Vagina (tissue), 2 donors: ENCODE measurements at regions of chr18 and their contacts with region 1.

Region 1: DNA sequence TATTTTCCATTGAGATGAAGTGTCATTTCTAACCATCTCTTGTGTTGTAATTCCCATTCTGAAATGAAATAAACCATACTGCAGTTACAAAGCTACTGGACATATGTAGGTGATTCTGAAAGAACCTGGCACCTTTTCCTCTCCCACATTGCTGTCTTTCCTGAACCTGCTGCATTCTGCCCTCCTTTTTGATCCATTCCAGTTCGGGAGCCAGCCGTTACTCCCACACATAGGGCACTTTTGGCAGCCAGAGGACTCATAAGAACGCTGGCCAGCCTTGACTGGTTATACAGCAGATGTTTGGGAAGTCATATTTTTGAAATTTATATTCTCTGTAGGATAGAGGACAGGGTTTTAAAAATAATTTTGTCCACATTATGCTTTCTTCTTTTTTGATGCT is 369.8 kb upstream of the CDH7 start:
- DNase-seq: no peak
- H3K4me3 ChIP-seq: no peak overlapping the region
- H3K27ac ChIP-seq: no peak overlapping the region
- H3K4me1 ChIP-seq: no peaks in the 10 kb centered on the region
- H3K27me3 ChIP-seq: no peaks in the 10 kb centered on the region
- CTCF ChIP-seq: no peak
- POLR2A ChIP-seq: no peak

Region 2: GRCh38 chr18:63808125-63808524 is 1572.9 kb before region 1 on chr18:
- intact Hi-C with region 1: loop called (anchors 5 kb)
- DNase-seq: no peak
- H3K4me3 ChIP-seq: no peak overlapping the region
- H3K27ac ChIP-seq: no peak overlapping the region
- H3K4me1 ChIP-seq: no peaks in the 10 kb centered on the region
- H3K27me3 ChIP-seq: no peaks in the 10 kb centered on the region
- CTCF ChIP-seq: no peak
- POLR2A ChIP-seq: no peak